ENCODE measurements at regions of chr13 and their contacts with region 1.

Region 1: DNA sequence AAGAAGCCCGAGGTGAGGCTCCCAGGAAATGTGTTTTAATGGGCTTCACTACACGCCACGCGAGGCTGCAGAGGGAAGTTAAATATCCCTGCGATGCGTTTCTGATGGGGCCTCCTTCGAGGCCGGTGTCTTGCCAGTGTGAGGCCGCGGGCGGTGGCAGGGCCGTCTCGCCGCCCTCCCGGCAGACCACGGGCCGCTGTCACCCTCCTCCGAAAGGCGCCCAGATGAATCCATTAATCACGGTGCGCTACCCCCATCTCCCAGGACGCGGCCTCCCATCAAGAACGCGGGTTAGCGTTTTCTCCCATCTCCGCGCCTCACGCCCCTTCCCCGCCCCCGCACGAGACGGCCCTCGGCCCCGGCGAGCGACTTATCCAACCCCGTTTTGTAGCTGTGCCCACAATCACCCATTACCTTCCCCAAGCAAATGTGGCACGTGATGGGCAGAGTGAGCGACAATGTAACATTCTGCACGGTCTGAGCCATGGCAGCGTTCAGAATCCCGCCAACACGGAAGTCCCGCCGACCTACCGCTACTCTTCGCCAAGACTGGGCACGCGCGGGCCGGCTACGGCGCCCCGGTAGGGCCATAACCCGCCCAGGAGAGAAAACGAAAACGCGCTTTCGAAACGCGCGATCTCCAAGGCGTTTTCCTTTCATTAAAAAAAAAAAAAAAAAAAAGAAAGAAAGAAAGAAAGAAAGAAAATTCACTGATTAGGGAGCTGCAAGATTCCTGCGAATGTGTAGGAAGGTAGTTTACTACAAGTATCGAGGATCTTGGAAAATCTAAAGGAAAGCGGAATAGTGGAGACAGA is at the start of gene OBI1:
- DNase-seq: peak; percentile 95
- H3K4me3 ChIP-seq: peak within 1 kb of the TSS; percentile 59 to 95 (median 78)
- H3K27ac ChIP-seq: peak within 1 kb of the TSS; percentile 69 to 86 (median 83)
- H3K4me1 ChIP-seq: peaks cover 0 to 20% (median 14%) of the 10 kb centered on the region in 4 donors
- H3K27me3 ChIP-seq: no peaks in the 10 kb centered on the region
- CTCF ChIP-seq: no peak
- EP300 ChIP-seq: no peak
- POLR2A ChIP-seq: peak; percentile 28 to 32
- total RNA-seq, gene OBI1: 9.1 to 13.6 (median 11.9) TPM

Region 2: GRCh38 chr13:78609464-78610205 is 49.2 kb before region 1 on chr13:
- intact Hi-C with region 1: loop called (anchors 5 kb)
- DNase-seq: no peak
- H3K4me3 ChIP-seq: peak overlapping the region; percentile 25 to 53 (median 44)
- H3K27ac ChIP-seq: no peak overlapping the region
- H3K4me1 ChIP-seq: peaks cover 0 to 33% (median 25%) of the 10 kb centered on the region in 4 donors
- H3K27me3 ChIP-seq: peaks cover 31 to 74% (median 58%) of the 10 kb centered on the region in 3 donors
- CTCF ChIP-seq: no peak
- EP300 ChIP-seq: no peak
- POLR2A ChIP-seq: no peak

Region 3: GRCh38 chr13:79405829-79406596 is 747.2 kb after region 1 on chr13 and contains the start of gene RBM26:
- intact Hi-C with region 1: loop called (anchors 10 kb)
- DNase-seq: peak; percentile 96
- H3K4me3 ChIP-seq: peak within 1 kb of the TSS; percentile 82 to 87 (median 86)
- H3K27ac ChIP-seq: peak within 1 kb of the TSS; percentile 93 to 97 (median 95)
- H3K4me1 ChIP-seq: peaks cover 0 to 54% (median 41%) of the 10 kb centered on the region in 4 donors
- H3K27me3 ChIP-seq: no peaks in the 10 kb centered on the region
- CTCF ChIP-seq: peak in 2 of 4 experiments; percentile 11 to 15
- EP300 ChIP-seq: no peak
- POLR2A ChIP-seq: peak; percentile 40 to 69
- total RNA-seq, gene RBM26: 29.6 to 47.4 (median 38.0) TPM